Mammary epithelial cell (primary cell): ENCODE measurements at regions of chr12 and their contacts with region 1.

Region 1: GRCh38 chr12:97404543-97404942 is 58.1 kb upstream of the RMST start:
- DNase-seq: peak; percentile 14
- H3K4me3 ChIP-seq: no peak overlapping the region
- H3K27ac ChIP-seq: no peak overlapping the region
- H3K4me1 ChIP-seq: no peaks in the 10 kb centered on the region
- H3K27me3 ChIP-seq: no peaks in the 10 kb centered on the region
- CTCF ChIP-seq: peak; percentile 80 to 88

Region 2: GRCh38 chr12:96578526-96579125 is 825.9 kb before region 1 on chr12:
- CTCF ChIA-PET with region 1: no interaction called
- dilution Hi-C with region 1: no loop called
- in situ Hi-C with region 1: no loop called
- intact Hi-C with region 1: loop called (anchors 10 kb)
- DNase-seq: peak; percentile 33
- H3K4me3 ChIP-seq: no peak overlapping the region
- H3K27ac ChIP-seq: no peak overlapping the region
- H3K4me1 ChIP-seq: no peaks in the 10 kb centered on the region
- H3K27me3 ChIP-seq: no peaks in the 10 kb centered on the region
- CTCF ChIP-seq: peak; percentile 64 to 67

Region 3: DNA sequence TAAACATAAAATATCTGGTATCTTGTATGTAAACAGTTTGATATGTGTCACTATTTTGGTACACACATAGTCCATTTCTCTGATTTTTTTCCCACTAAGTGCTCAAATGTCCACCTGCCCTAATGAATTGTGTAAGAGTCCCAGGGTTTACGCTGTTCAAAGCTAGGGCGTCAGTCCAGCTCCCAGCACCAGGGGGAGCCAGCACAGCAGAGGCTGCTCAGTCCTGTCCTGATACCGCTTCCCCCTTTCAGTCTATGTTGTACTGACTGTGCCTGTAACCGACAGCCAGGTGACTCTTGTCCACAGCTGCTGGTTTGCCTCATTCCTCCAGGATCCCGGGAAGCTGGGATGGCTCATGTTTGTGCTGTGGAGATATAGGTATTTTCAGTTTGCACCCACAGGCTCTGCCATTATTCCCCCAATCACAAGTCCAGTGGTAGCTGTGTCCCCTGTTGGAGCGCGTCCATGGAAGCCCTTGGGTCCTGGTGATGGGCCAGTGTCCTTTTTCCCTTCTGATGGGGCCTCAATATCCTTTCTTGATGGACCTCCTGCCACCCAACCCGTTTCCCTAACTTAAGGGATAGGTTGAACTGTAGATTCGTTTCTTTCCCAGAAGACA is 255.5 kb before region 1 on chr12:
- CTCF ChIA-PET with region 1: no interaction called
- dilution Hi-C with region 1: no loop called
- in situ Hi-C with region 1: no loop called
- intact Hi-C with region 1: loop called (anchors 2 kb)
- DNase-seq: peak; percentile 26
- H3K4me3 ChIP-seq: no peak overlapping the region
- H3K27ac ChIP-seq: no peak overlapping the region
- H3K4me1 ChIP-seq: no peaks in the 10 kb centered on the region
- H3K27me3 ChIP-seq: no peaks in the 10 kb centered on the region
- CTCF ChIP-seq: peak; percentile 86 to 92

Region 4: GRCh38 chr12:97426492-97427116 is 22.1 kb after region 1 on chr12:
- CTCF ChIA-PET with region 1: no interaction called
- dilution Hi-C with region 1: no loop called
- in situ Hi-C with region 1: no loop called
- intact Hi-C with region 1: no loop called
- DNase-seq: no peak
- H3K4me3 ChIP-seq: no peak overlapping the region
- H3K27ac ChIP-seq: no peak overlapping the region
- H3K4me1 ChIP-seq: no peaks in the 10 kb centered on the region
- H3K27me3 ChIP-seq: no peaks in the 10 kb centered on the region
- CTCF ChIP-seq: no peak

Region 5: GRCh38 chr12:97452230-97452629 is 47.7 kb after region 1 on chr12:
- CTCF ChIA-PET with region 1: no interaction called
- dilution Hi-C with region 1: no loop called
- in situ Hi-C with region 1: no loop called
- intact Hi-C with region 1: no loop called
- DNase-seq: no peak
- H3K4me3 ChIP-seq: no peak overlapping the region
- H3K27ac ChIP-seq: no peak overlapping the region
- H3K4me1 ChIP-seq: no peaks in the 10 kb centered on the region
- H3K27me3 ChIP-seq: no peaks in the 10 kb centered on the region
- CTCF ChIP-seq: no peak